H1 (cell line): ENCODE measurements at regions of chr4 and their contacts with region 1.

Region 1: GRCh38 chr4:75895744-75896314 is 6.4 kb downstream of the PPEF2 start:
- DNase-seq: no peak
- H3K4me3 ChIP-seq: no peak overlapping the region
- H3K27ac ChIP-seq: no peak overlapping the region
- H3K4me1 ChIP-seq: no peaks in the 10 kb centered on the region
- H3K27me3 ChIP-seq: no peaks in the 10 kb centered on the region
- CTCF ChIP-seq: peak; percentile 17 to 71 (median 64); a peak in 3 of 4 replicates
- EP300 ChIP-seq: no peak
- POLR2A ChIP-seq: no peak
- RAD21 ChIP-seq: peak; percentile 69 to 72

Region 2: DNA sequence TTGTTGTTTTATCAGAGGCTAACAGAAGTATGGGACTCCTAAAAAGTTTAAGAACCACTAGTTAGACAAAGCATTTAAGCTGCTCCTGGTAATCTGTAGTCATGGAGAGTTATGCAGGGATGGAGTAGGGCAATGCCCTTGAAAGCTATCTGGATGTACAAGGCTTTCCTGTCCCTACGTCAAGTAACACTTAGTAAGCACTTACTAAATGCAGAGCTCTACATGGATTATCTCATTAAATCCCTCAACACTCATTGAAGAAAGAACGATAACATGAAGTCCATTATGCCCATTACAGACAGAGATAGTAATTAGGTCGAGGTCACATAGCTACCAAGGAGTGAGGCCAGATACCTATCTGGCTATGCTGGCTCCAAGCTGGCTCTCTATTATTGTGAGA is 26.7 kb before region 1 on chr4:
- CTCF ChIA-PET with region 1: interaction called, 13 read pairs
- POLR2A ChIA-PET with region 1: no interaction called
- DNase-seq: no peak
- H3K4me3 ChIP-seq: no peak overlapping the region
- H3K27ac ChIP-seq: no peak overlapping the region
- H3K4me1 ChIP-seq: no peaks in the 10 kb centered on the region
- H3K27me3 ChIP-seq: no peaks in the 10 kb centered on the region
- CTCF ChIP-seq: no peak
- EP300 ChIP-seq: no peak
- POLR2A ChIP-seq: no peak
- RAD21 ChIP-seq: no peak

Region 3: DNA sequence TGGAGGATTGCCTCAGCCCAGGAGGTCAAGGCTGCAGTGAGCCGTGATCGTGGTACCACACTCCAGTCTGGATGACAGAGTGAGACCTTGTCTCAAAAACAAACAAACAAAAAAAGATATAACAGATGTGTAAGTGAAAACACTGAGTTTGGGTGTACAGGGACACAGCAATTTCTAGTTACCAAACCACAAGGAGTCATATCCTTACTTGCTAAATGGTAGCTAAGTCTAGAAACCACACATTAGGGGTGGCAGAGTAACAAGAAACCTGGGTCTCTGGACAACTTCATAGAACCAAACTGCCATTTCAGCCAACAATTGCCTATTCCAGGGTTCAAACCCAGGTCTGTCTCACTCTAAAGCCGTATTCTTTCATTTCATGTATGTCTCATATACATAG is 14.4 kb before region 1 on chr4:
- CTCF ChIA-PET with region 1: interaction called, 27 read pairs
- POLR2A ChIA-PET with region 1: no interaction called
- DNase-seq: no peak
- H3K4me3 ChIP-seq: no peak overlapping the region
- H3K27ac ChIP-seq: no peak overlapping the region
- H3K4me1 ChIP-seq: peaks cover 0 to 4% (median 2%) of the 10 kb centered on the region in 4 experiments; a peak in 2 of 7 replicates
- H3K27me3 ChIP-seq: no peaks in the 10 kb centered on the region
- CTCF ChIP-seq: no peak
- EP300 ChIP-seq: no peak
- POLR2A ChIP-seq: no peak
- RAD21 ChIP-seq: no peak

Region 4: DNA sequence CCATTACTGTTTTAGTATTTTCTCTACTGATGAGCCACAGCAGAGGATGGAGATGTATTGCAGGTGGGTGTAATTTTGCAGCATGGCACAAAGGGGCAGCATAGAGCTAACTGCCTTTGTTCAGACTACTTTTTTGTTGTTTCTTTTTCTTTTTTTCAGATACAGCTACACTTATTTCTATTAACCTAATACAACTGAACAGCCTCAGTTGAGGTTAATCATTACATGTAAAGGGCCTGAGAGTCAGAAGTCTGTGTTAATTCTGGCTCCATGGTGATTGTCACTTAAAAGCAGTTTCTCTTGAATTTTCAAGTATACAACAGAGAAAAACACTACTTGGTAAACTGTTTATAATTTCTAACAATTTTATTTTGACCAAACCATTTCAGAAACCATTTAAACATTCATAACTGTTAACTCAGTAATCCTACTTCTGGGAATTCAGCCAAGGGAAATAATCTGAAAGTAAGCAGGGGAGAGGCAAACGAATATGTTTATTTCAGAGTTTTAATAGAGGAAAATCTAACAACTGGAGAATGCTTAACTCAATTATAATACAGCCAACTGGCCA is 20.3 kb after region 1 on chr4:
- CTCF ChIA-PET with region 1: interaction called, 144 read pairs
- POLR2A ChIA-PET with region 1: no interaction called
- DNase-seq: no peak
- H3K4me3 ChIP-seq: no peak overlapping the region
- H3K27ac ChIP-seq: no peak overlapping the region
- H3K4me1 ChIP-seq: peaks cover 0 to 3% (median 0%) of the 10 kb centered on the region in 4 experiments; a peak in 2 of 7 replicates
- H3K27me3 ChIP-seq: no peaks in the 10 kb centered on the region
- CTCF ChIP-seq: peak in 2 of 3 experiments; percentile 52 to 76; a peak in 2 of 4 replicates
- EP300 ChIP-seq: no peak
- POLR2A ChIP-seq: no peak
- RAD21 ChIP-seq: peak; percentile 69 to 73

Region 5: DNA sequence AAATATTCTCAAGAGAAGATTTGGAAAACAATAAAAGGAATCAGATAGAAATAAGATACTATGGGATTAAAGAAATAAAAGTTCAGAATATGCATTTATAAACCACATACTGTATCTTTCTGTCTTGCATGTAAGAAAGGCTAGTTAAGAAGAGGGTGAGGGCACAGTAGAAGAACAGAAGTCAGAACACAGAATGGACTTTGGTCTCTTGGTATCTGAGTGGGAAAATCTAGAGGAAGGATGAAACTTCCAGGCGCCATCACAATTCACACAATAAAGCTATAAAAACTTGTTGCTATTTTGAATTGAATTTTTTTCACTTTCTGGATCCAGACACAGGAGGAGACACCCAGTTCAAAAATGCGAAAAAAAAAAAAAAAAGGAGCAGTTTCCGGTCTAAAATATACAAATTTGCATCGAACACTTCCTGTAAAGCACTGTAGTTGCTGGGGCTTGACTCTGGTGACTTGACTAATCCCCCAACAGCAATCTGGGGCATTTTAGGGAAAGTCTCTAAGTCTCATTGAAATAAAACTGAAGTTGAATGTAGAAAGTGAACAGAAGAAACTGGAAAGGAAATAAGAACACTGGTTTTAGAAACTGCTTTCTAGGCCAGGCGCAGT is 53.1 kb after region 1 on chr4:
- CTCF ChIA-PET with region 1: interaction called, 11 read pairs
- POLR2A ChIA-PET with region 1: interaction called, 4 read pairs
- DNase-seq: no peak
- H3K4me3 ChIP-seq: no peak overlapping the region
- H3K27ac ChIP-seq: no peak overlapping the region
- H3K4me1 ChIP-seq: no peaks in the 10 kb centered on the region
- H3K27me3 ChIP-seq: no peaks in the 10 kb centered on the region
- CTCF ChIP-seq: no peak
- EP300 ChIP-seq: no peak
- POLR2A ChIP-seq: no peak
- RAD21 ChIP-seq: no peak